ENCODE measurements at regions of chr18 and their contacts with region 1.

Region 1: GRCh38 chr18:5237723-5238370 is 40.8 kb upstream of the AKAIN1 start:
- DNase-seq: peak; percentile 82 to 83
- ATAC-seq: peak; percentile 94 to 95
- H3K4me3 ChIP-seq: peak overlapping the region; percentile 76 to 89 (median 82)
- H3K27ac ChIP-seq: peak overlapping the region; percentile 96 to 99 (median 98)
- H3K4me1 ChIP-seq: peaks cover 39 to 46% of the 10 kb centered on the region in 2 donors
- H3K27me3 ChIP-seq: no peaks in the 10 kb centered on the region
- CTCF ChIP-seq: peak in 4 of 5 experiments; percentile 10 to 55 (median 36)
- POLR2A ChIP-seq: peak; percentile 75 to 76

Region 2: DNA sequence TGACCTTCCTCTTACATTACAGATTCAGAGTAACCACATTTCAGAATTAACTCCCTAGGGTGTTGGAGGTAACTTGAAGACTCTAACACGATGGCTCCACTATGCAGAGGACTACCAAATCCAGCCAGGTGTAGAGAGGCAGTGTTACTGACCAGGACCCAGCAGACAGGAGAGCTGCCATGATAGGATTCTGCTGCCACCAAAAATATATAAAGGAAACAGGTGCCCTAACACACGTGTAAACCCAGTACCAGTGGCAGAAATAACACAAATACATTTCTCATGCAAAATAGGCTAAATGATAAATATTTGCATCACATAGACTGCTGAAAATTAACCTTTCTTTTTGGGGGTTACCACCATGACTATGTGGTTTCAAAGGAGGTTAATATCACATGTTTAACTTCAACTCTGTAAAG is 50.7 kb after region 1 on chr18:
- in situ Hi-C with region 1: loop called in 3 of 4 experiments (anchors 5 to 10 kb)
- intact Hi-C with region 1: no loop called
- DNase-seq: no peak
- ATAC-seq: no peak
- H3K4me3 ChIP-seq: no peak overlapping the region
- H3K27ac ChIP-seq: no peak overlapping the region
- H3K4me1 ChIP-seq: peaks cover 6 to 9% of the 10 kb centered on the region in 2 donors
- H3K27me3 ChIP-seq: no peaks in the 10 kb centered on the region
- CTCF ChIP-seq: no peak
- POLR2A ChIP-seq: no peak

Region 3: GRCh38 chr18:5295981-5296705 is 58.3 kb after region 1 on chr18:
- in situ Hi-C with region 1: loop called in 2 of 4 experiments (anchors 5 to 10 kb)
- intact Hi-C with region 1: loop called (anchors 1 kb)
- DNase-seq: peak; percentile 90 to 96
- ATAC-seq: peak; percentile 78 to 82
- H3K4me3 ChIP-seq: peak overlapping the region; percentile 76 to 97 (median 94)
- H3K27ac ChIP-seq: peak overlapping the region; percentile 93 to 99 (median 96)
- H3K4me1 ChIP-seq: peaks cover 8 to 15% of the 10 kb centered on the region in 2 donors
- H3K27me3 ChIP-seq: no peaks in the 10 kb centered on the region
- CTCF ChIP-seq: peak in 1 of 5 experiments; percentile 11
- POLR2A ChIP-seq: peak; percentile 70 to 84